ENCODE measurements at regions of chr17 and their contacts with region 1.

Region 1: GRCh38 chr17:72556944-72557826 is 436.4 kb downstream of the SOX9 start:
- DNase-seq: peak; percentile 36 to 41
- ATAC-seq: peak; percentile 24 to 71 (median 53)
- H3K4me3 ChIP-seq: no peak overlapping the region
- H3K27ac ChIP-seq: no peak overlapping the region
- H3K4me1 ChIP-seq: no peaks in the 10 kb centered on the region
- H3K27me3 ChIP-seq: peaks cover 0 to 29% (median 10%) of the 10 kb centered on the region in 7 donors
- CTCF ChIP-seq: peak; percentile 65 to 86 (median 81)

Region 2: GRCh38 chr17:72657467-72658317 is 100.5 kb after region 1 on chr17:
- intact Hi-C with region 1: loop called in 1 of 10 experiments (anchors 10 kb)
- DNase-seq: no peak
- ATAC-seq: no peak
- H3K4me3 ChIP-seq: no peak overlapping the region
- H3K27ac ChIP-seq: no peak overlapping the region
- H3K4me1 ChIP-seq: peaks cover 0 to 10% (median 0%) of the 10 kb centered on the region in 9 donors
- H3K27me3 ChIP-seq: no peaks in the 10 kb centered on the region
- CTCF ChIP-seq: no peak

Region 3: DNA sequence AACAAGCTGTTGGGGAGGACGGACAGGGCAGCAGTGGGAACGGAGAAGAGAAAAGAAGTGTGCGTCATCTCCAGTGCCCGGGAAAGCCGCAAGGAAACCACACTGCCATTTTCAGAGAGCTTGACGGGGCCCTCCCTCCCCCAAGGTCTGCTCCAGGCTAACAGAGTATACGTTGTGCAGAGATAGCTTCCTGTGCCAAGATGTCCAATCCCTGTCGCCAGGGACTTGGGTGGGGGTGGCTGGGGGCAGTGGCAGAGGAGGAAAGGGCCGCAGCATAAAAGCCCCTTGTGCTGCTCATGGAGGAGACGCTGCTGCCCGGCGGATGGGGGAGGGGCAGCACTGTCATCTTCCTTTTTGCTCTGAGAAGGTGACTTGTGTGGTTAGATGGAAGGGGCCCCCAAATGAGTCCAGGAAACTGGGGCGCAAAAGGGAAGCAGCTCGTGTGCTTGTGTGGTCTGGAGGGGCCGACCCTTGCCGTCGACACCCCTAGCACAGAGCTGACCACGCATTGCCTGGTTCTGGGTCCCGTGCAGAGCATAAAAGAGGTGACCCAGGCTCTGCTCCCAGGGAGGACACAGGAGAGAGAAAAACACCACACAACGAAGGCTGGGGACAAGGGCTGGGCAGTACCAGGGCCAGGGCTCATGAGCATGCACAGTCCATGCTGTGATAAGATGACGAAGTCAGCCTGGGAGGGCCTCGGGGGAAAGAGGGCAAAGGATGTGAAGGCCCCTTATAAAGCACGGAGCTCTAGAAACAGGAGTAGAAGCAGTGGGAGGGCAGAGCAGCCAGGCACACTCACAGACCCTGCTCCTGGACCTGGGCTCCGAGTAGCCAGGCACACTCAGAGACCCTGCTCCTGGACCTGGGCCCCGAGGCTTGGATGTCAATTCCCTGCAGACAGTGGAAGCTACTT is 162.7 kb after region 1 on chr17:
- intact Hi-C with region 1: loop called in 8 of 10 experiments (anchors 5 to 10 kb)
- DNase-seq: no peak
- ATAC-seq: peak in 3 of 8 donors; percentile 19 to 37 (median 21)
- H3K4me3 ChIP-seq: peak overlapping the region in 1 of 10 donors; percentile 14
- H3K27ac ChIP-seq: no peak overlapping the region
- H3K4me1 ChIP-seq: peaks cover 0 to 15% (median 0%) of the 10 kb centered on the region in 9 donors
- H3K27me3 ChIP-seq: no peaks in the 10 kb centered on the region
- CTCF ChIP-seq: no peak

Region 4: GRCh38 chr17:73156166-73156840 is 599.1 kb after region 1 on chr17:
- intact Hi-C with region 1: loop called in 6 of 10 experiments (anchors 10 kb)
- DNase-seq: peak; percentile 62 to 73
- ATAC-seq: peak; percentile 81 to 95 (median 92)
- H3K4me3 ChIP-seq: no peak overlapping the region
- H3K27ac ChIP-seq: peak overlapping the region in 1 of 10 donors; percentile 10
- H3K4me1 ChIP-seq: peaks cover 0 to 20% (median 8%) of the 10 kb centered on the region in 9 donors
- H3K27me3 ChIP-seq: peaks cover 0 to 40% (median 24%) of the 10 kb centered on the region in 7 donors
- CTCF ChIP-seq: peak; percentile 50 to 89 (median 80)

Region 5: DNA sequence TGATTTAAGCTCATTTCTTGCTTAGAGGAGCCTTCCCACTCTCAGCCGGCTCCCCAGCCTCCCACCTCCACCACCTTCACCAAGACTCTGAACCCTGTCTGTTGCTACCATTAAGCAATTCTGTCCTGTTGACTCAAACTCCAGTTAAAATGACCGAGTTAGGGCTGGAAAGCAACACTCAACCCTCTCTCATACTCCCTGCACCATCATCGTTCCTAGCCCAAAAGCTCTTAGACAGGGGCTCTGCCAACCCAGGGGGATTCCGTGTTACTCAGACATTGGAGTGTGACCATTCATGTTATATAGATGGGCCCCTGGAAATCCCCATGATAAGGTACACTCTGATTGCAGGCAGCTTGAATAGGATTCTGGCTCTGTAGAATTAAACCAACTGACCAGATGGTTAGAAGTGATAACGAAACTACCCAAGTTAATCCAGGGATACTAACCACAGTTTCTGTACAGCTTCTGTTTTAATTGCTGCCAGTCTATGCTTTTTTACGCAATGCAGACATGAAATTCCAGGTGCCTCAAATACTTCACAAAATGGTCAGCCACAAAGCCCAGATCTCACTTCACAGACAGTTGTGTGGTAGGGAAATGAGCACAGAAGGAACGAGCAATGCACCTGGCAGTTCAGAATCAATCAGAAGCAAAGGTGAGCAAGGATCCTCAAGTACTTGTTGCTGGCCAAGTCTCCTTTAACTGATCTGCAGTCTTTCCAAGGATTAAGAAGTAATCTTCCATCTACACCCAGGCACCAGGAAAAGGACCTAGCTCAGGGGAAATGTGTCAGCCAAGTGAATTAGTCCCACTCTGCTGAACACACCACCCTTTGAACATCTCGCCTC is 609.8 kb after region 1 on chr17:
- intact Hi-C with region 1: loop called in 4 of 10 experiments (anchors 5 to 10 kb)
- DNase-seq: no peak
- ATAC-seq: no peak
- H3K4me3 ChIP-seq: peak overlapping the region in 7 of 10 donors; percentile 46 to 71 (median 58)
- H3K27ac ChIP-seq: peak overlapping the region in 1 of 10 donors; percentile 13
- H3K4me1 ChIP-seq: peaks cover 0 to 32% (median 16%) of the 10 kb centered on the region in 9 donors
- H3K27me3 ChIP-seq: peaks cover 0 to 76% (median 68%) of the 10 kb centered on the region in 7 donors
- CTCF ChIP-seq: no peak

Region 6: GRCh38 chr17:73172252-73172651 is 615.1 kb after region 1 on chr17:
- intact Hi-C with region 1: loop called in 4 of 10 experiments (anchors 5 to 10 kb)
- DNase-seq: no peak
- ATAC-seq: no peak
- H3K4me3 ChIP-seq: no peak overlapping the region
- H3K27ac ChIP-seq: no peak overlapping the region
- H3K4me1 ChIP-seq: peaks cover 0 to 3% (median 0%) of the 10 kb centered on the region in 9 donors
- H3K27me3 ChIP-seq: peaks cover 0 to 25% (median 24%) of the 10 kb centered on the region in 7 donors
- CTCF ChIP-seq: no peak

Region 7: GRCh38 chr17:73192894-73193701 is 635.9 kb after region 1 on chr17 and contains the start of gene COG1:
- intact Hi-C with region 1: loop called in 1 of 10 experiments (anchors 5 kb)
- DNase-seq: peak; percentile 91 to 92
- ATAC-seq: peak; percentile 88 to 93 (median 90)
- H3K4me3 ChIP-seq: peak within 1 kb of the TSS; percentile 67 to 98 (median 92)
- H3K27ac ChIP-seq: peak within 1 kb of the TSS; percentile 58 to 96 (median 90)
- H3K4me1 ChIP-seq: peaks cover 3 to 25% (median 15%) of the 10 kb centered on the region in 9 donors
- H3K27me3 ChIP-seq: no peaks in the 10 kb centered on the region
- CTCF ChIP-seq: no peak
- total RNA-seq, gene COG1: 44.4 to 70.6 (median 58.0) TPM